ENCODE measurements at regions of chr15 and their contacts with region 1.

Region 1: GRCh38 chr15:43824302-43825246 is at the start of gene MFAP1:
- DNase-seq: peak; percentile 96
- H3K4me3 Mint-ChIP-seq: peak within 1 kb of the TSS; percentile 98
- H3K27ac Mint-ChIP-seq: peak within 1 kb of the TSS; percentile 98
- H3K4me1 Mint-ChIP-seq: peaks cover 52% of the 10 kb centered on the region
- H3K27me3 Mint-ChIP-seq: no peaks in the 10 kb centered on the region
- total RNA-seq, gene MFAP1: 28.5 to 28.7 TPM

Region 2: GRCh38 chr15:43776718-43777583 is 47.6 kb before region 1 on chr15 and contains the start of gene ELL3:
- CTCF ChIA-PET with region 1: interaction called, 6 read pairs
- intact Hi-C with region 1: loop called (anchors 1 kb)
- DNase-seq: peak; percentile 95
- H3K4me3 Mint-ChIP-seq: peak within 1 kb of the TSS; percentile 89
- H3K27ac Mint-ChIP-seq: peak within 1 kb of the TSS; percentile 84
- H3K4me1 Mint-ChIP-seq: peaks cover 23% of the 10 kb centered on the region
- H3K27me3 Mint-ChIP-seq: no peaks in the 10 kb centered on the region
- total RNA-seq, gene ELL3: 1.0 to 1.2 TPM

Region 3: DNA sequence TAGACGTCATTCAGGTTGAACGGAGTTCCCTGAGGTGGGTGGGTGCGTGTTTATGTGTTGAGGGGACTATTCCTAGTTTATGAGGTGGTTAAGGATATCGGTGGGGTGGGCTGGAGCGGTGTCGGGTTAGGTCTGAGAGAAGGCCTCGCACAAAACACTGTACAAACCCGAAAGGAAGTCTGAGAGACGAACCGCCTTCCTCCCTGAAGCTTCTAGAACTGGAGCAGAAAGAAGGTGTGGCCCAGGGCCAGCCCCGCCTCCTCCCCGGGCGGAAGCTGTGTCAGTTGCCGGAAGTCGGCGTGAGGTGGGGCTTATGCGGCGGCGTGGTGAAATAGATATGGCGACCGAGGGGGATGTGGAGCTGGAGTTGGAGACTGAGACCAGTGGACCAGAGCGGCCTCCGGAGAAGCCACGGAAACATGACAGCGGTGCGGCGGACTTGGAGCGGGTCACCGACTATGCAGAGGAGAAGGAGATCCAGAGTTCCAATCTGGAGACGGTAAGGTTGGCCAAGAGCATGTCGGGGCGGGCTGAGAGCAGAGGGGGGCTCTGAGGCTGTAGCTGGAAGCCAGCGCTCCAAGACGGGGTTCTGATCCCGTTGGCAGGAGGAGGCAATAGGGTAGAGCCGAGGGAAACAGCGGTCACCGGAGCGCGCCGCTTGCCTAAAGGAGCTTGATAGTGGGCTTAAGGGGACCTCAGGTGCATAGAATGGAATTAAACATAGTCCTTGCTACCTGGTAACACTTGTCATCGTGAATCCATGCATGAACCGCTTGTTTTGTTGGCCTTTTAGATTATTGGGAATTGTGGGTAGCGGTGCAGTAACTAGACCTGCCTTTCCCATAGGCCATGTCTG is 24.1 kb before region 1 on chr15 and contains the start of gene HYPK:
- CTCF ChIA-PET with region 1: interaction called, 4 read pairs
- intact Hi-C with region 1: loop called (anchors 1 kb)
- DNase-seq: peak; percentile 94
- H3K4me3 Mint-ChIP-seq: peak within 1 kb of the TSS; percentile 97
- H3K27ac Mint-ChIP-seq: peak within 1 kb of the TSS; percentile 95
- H3K4me1 Mint-ChIP-seq: peaks cover 43% of the 10 kb centered on the region
- H3K27me3 Mint-ChIP-seq: no peaks in the 10 kb centered on the region
- total RNA-seq, gene HYPK: 19.6 to 21.1 TPM

Region 4: DNA sequence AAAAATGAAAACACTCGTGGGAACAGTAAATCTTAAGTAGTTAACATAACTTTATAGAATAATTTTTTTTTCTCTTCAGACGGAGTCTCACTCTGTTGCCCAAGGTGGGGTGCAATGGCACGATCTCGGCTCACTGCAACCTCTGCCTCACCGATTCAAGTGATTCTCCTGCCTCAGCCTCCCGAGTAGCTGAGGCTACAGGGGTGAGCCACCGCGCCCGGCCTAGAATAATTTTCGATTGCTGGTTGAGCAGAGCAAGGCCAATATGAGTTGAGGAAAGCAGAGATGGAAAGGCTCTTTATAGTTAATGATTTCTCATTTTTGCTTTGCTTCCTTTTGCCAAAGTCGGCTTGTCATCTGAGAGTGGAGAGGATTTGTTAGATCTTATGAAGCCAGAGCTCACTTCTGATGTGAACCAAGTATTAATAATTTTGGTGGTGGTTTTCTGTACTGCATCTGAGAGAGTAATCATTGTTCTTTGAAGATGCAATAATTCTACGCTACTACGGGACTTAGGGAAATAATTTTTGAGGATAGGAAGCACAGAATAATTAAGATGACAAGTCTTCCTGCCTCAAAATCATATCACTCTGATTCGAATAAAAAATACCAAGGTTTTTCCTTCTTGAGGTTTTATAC is 462.4 kb after region 1 on chr15:
- CTCF ChIA-PET with region 1: no interaction called
- intact Hi-C with region 1: loop called (anchors 1 kb)
- DNase-seq: no peak
- H3K4me3 Mint-ChIP-seq: peak overlapping the region; percentile 88
- H3K27ac Mint-ChIP-seq: peak overlapping the region; percentile 94
- H3K4me1 Mint-ChIP-seq: peaks cover 36% of the 10 kb centered on the region
- H3K27me3 Mint-ChIP-seq: no peaks in the 10 kb centered on the region

Region 5: DNA sequence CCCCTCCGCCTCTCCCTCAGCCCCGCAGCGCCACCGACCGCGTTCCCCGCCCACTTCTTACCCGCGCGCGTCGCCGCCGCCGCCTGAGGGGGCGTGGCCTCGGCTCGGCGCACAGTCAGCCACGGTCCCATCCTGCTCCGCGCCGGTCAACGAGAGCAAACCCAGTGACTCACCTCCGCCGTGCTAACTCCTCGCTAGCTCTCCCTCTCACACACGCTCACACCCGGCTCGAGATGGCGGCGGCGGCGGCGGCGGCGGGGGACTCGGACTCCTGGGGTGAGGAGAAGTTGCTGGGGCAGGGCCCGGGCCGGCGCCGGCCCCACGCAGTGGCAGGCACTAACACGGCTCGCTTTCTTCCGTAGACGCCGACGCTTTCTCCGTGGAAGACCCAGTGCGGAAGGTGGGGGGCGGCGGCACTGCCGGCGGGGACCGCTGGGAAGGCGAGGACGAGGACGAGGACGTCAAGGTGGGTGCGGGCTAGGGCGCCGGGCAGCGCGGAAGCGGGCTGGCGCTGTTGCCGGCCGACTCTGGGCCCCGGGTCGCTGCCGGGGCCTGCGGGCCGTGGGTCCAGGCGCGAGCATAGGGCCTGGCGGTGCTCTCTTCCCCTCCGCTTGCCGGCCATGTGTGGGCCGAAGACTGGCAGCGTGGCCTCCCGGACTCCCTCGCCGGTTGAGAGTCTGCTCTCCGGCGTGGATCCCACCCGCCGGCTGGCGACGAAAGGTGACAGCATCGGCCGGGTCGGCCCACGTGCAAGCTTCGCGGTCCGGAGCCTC is 712.6 kb after region 1 on chr15 and contains the start of gene EIF3J:
- CTCF ChIA-PET with region 1: no interaction called
- intact Hi-C with region 1: loop called (anchors 2 kb)
- DNase-seq: peak; percentile 96
- H3K4me3 Mint-ChIP-seq: peak within 1 kb of the TSS; percentile 84
- H3K27ac Mint-ChIP-seq: peak within 1 kb of the TSS; percentile 95
- H3K4me1 Mint-ChIP-seq: peaks cover 48% of the 10 kb centered on the region
- H3K27me3 Mint-ChIP-seq: no peaks in the 10 kb centered on the region
- total RNA-seq, gene EIF3J: 75.8 to 77.9 TPM

Measured in activated naive CD4-positive, alpha-beta T cell treated with anti-CD3 and anti-CD28 coated beads for 36 hours (primary cell).